ENCODE measurements at regions of chr1 and their contacts with region 1.

Region 1: GRCh38 chr1:244970661-244971551 is 106.6 kb upstream of the HNRNPU start:
- DNase-seq: peak in 1 of 2 experiments; percentile 97
- ATAC-seq: peak; percentile 76 to 82
- H3K4me3 ChIP-seq: peak overlapping the region; percentile 57
- H3K27ac ChIP-seq: peak overlapping the region; percentile 93
- H3K4me1 ChIP-seq: peaks cover 30% of the 10 kb centered on the region
- CTCF ChIP-seq: peak; percentile 52
- EP300 ChIP-seq: no peak
- POLR2A ChIP-seq: peak; percentile 68
- RAD21 ChIP-seq: peak; percentile 36 to 53

Region 2: DNA sequence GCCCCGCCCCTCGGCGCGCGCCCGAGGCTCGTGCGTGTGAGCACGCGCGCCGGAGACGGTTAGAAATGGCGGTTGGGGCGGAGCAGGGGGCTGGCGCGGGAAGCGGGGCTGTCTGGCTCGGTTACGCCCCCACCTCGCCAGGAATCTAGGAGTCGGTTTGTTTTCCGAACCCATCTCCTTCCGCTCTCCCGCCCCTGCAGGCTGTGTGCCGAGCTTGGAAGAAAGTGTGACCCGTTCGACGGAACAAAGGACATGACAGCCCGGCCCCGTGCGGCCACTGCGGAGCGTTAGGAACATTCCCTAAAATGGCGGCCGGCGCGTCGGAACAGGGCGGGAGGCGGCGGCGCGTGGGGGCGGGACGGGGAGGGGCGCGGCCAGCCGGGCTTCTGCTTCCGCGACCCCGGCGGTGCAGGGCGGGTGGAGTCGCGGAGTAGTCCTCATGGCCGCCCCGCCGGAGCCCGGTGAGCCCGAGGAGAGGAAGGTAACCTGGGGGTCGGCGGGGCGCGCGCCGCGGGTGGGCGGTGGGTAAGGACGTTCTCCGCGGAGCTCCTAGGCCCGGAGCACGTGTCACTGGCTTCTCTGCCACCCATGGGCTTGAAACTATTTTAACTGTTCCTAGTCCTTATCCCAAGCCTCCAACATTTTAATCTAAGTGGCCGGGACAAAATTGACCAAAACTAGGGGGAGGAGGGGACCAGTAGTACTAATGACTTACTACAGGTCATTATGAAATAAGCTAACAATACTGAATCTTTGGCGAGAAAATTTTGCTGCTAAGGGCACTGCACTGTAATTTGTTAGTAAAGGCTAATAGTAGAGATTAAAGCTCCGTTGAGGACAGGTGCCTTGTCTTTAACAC is 135.4 kb before region 1 on chr1 and contains the start of gene COX20:
- CTCF ChIA-PET with region 1: interaction called, 3 read pairs
- POLR2A ChIA-PET with region 1: interaction called, 31 read pairs
- DNase-seq: peak; percentile 66 to 95
- ATAC-seq: peak; percentile 72 to 78
- H3K4me3 ChIP-seq: peak within 1 kb of the TSS; percentile 69
- H3K27ac ChIP-seq: peak within 1 kb of the TSS; percentile 90 to 97
- H3K4me1 ChIP-seq: peaks cover 26% of the 10 kb centered on the region; the same call in 2 of the 3 replicates
- CTCF ChIP-seq: no peak
- EP300 ChIP-seq: no peak
- POLR2A ChIP-seq: peak; percentile 69
- RAD21 ChIP-seq: no peak
- polyA plus RNA-seq, gene COX20: 28.1 and 65.4 TPM in 2 replicates

Region 3: GRCh38 chr1:244864253-244865027 is 106.5 kb before region 1 on chr1 and contains the start of gene HNRNPU:
- CTCF ChIA-PET with region 1: interaction called, 5 read pairs
- POLR2A ChIA-PET with region 1: interaction called, 102 read pairs
- DNase-seq: peak; percentile 66 to 98
- ATAC-seq: peak; percentile 75 to 90
- H3K4me3 ChIP-seq: peak within 1 kb of the TSS; percentile 100
- H3K27ac ChIP-seq: peak within 1 kb of the TSS; percentile 96 to 100
- H3K4me1 ChIP-seq: peaks cover 37% of the 10 kb centered on the region
- CTCF ChIP-seq: no peak; the same call in 2 of the 3 replicates
- EP300 ChIP-seq: no peak
- POLR2A ChIP-seq: peak; percentile 97
- RAD21 ChIP-seq: peak; percentile 7 to 9; a peak in 1 of 5 replicates
- polyA plus RNA-seq, gene HNRNPU: 345 and 529 TPM in 2 replicates

Region 4: DNA sequence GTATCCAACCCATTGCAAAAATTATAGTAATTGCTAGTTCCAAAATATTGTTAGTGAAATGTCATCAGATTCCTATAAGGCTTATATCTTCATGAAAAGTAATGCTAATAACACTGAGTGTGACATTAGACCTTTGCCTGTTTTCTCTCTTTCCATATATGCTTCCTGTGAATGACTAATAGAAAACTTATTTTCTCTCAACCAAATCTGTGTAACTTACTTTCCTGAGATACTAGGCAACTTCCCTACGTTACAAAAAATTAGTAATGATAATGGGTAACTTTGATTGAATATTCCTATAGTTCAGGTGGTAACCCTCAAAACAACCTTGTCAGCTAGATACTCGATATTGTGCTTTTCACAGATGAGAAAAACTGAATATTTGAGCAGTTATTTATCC is 17.6 kb after region 1 on chr1:
- CTCF ChIA-PET with region 1: interaction called, 10 read pairs
- POLR2A ChIA-PET with region 1: interaction called, 4 read pairs
- DNase-seq: no peak
- ATAC-seq: no peak
- H3K4me3 ChIP-seq: no peak overlapping the region
- H3K27ac ChIP-seq: no peak overlapping the region
- H3K4me1 ChIP-seq: peaks cover 19% of the 10 kb centered on the region
- CTCF ChIP-seq: no peak
- EP300 ChIP-seq: no peak
- POLR2A ChIP-seq: no peak
- RAD21 ChIP-seq: no peak

Region 5: DNA sequence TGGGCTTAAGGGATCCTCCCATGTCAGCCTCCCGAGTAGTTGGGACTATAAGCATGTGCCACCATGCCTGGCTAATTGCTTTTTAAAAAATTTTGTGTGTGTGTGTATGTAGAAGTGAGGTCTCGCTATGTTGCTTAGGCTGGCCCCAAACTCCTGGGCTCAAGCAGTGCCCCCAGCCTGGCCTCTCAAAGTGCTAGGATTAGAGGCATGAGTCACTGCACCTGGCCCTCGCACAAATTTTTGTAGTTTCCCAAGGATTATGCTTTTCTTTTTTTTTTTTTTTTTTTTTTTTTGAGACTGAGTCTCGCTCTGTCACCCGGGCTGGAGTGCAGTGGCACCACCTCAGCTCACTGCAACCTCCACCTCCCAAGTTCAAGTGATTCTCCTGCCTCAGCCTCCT is 37.9 kb after region 1 on chr1:
- CTCF ChIA-PET with region 1: no interaction called
- POLR2A ChIA-PET with region 1: interaction called, 10 read pairs
- DNase-seq: no peak
- ATAC-seq: no peak
- H3K4me3 ChIP-seq: no peak overlapping the region
- H3K27ac ChIP-seq: no peak overlapping the region
- H3K4me1 ChIP-seq: no peaks in the 10 kb centered on the region
- CTCF ChIP-seq: no peak
- EP300 ChIP-seq: no peak
- POLR2A ChIP-seq: no peak
- RAD21 ChIP-seq: no peak

Measured in A549 (cell line).